Endothelial cell of umbilical vein (primary cell): ENCODE measurements at regions of chr19 and their contacts with region 1.

Region 1: DNA sequence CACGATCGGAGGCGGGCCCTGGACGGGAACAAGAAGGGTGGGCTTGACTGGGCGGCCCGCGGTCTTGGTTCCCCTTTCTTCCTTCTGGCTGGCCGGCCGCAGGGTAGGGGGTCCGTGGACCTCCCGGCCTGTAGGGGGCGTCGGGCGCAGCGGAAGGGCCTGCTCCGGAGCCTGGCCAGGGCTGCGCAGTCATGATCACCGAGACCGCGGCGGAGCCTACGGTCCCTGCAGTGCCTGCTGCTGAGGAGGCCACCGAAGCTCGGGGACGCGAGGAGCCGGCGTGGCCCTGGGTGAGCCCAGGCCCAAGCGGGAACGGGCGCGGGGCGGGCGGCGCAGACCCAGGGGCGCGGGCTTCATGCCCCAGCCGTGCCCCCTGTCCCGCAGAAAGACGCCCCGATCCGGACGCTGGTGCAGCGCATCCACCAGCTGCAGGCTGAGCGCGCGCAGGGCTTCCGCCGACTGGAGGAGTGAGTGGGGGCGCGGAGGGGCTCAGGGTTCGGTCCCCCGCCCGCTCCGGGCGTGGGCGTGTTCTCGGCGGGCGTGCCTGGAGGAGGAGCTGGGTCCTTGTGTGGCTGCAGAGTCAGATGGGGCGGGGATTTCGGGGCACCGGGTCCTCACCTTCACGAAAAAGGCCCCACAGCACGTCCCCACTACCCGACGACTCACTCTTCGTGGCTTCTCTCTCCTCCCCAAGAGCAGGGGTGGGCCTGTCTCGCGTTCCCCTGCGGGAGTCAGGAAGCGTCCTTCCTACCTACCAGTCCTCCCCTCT is at the start of gene REX1BD:
- DNase-seq: peak; percentile 85
- H3K4me3 ChIP-seq: peak within 1 kb of the TSS; percentile 32 to 78 (median 65)
- H3K27ac ChIP-seq: peak within 1 kb of the TSS; percentile 16
- H3K4me1 ChIP-seq: peaks cover 15% of the 10 kb centered on the region
- H3K27me3 ChIP-seq: no peaks in the 10 kb centered on the region
- CTCF ChIP-seq: peak; percentile 95 to 96
- POLR2A ChIP-seq: peak; percentile 87
- total RNA-seq, gene REX1BD: 64.0 and 64.4 TPM in 2 replicates

Region 2: DNA sequence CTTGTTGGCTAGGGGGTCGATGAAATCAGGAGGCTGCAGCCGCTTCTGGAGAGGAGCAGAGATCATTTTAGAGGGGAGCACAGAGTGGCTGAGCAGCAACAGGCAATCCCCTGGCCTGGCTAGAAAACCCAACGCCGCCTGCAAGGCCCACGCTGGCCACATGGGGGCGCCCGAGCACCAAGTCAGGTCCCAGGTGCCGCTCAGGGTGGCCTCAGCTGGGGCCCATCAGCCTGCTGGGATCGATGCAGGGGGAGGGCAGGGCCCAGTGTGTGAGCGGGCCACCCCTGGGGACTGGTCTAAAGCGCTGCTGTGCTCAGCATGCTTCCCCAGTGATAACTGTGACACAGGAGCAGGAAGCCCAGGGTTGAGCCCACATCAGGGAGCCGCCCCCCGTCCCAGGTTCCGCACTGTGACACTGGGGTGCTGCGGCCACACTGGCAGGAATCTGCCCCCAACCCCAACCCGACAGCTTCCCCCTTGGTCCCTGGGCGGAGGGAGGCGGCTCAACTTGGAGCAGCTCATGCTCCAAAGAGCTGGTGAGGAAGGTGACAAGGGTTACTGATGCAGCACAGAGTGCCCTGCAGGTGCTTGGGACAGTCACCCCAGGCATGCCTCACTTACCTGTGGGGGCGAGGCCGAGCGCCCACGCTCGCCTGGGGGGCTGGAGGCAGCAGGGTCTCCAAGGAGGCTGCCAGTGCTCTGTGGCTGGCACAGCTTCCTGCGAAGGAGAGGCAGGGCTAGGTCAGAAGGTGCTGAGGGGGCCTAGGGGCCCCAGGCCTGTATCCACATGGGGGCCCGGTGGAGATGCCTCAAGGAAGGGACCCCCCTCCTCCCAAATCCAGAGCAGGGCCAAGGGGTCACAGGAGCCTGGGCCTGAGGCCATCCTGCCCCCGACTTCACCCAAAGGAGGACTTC is 137.6 kb before region 1 on chr19:
- CTCF ChIA-PET with region 1: interaction called, 10 read pairs
- POLR2A ChIA-PET with region 1: no interaction called
- dilution Hi-C with region 1: no loop called
- intact Hi-C with region 1: no loop called
- DNase-seq: peak; percentile 65
- H3K4me3 ChIP-seq: no peak overlapping the region
- H3K27ac ChIP-seq: no peak overlapping the region
- H3K4me1 ChIP-seq: no peaks in the 10 kb centered on the region
- H3K27me3 ChIP-seq: no peaks in the 10 kb centered on the region
- CTCF ChIP-seq: peak; percentile 97 to 99
- POLR2A ChIP-seq: no peak

Region 3: GRCh38 chr19:18460900-18461299 is 127.9 kb before region 1 on chr19:
- CTCF ChIA-PET with region 1: interaction called, 18 read pairs
- POLR2A ChIA-PET with region 1: interaction called, 4 read pairs
- dilution Hi-C with region 1: no loop called
- intact Hi-C with region 1: no loop called
- DNase-seq: no peak
- H3K4me3 ChIP-seq: no peak overlapping the region
- H3K27ac ChIP-seq: no peak overlapping the region
- H3K4me1 ChIP-seq: peaks cover 10% of the 10 kb centered on the region
- H3K27me3 ChIP-seq: no peaks in the 10 kb centered on the region
- CTCF ChIP-seq: no peak
- POLR2A ChIP-seq: no peak

Region 4: DNA sequence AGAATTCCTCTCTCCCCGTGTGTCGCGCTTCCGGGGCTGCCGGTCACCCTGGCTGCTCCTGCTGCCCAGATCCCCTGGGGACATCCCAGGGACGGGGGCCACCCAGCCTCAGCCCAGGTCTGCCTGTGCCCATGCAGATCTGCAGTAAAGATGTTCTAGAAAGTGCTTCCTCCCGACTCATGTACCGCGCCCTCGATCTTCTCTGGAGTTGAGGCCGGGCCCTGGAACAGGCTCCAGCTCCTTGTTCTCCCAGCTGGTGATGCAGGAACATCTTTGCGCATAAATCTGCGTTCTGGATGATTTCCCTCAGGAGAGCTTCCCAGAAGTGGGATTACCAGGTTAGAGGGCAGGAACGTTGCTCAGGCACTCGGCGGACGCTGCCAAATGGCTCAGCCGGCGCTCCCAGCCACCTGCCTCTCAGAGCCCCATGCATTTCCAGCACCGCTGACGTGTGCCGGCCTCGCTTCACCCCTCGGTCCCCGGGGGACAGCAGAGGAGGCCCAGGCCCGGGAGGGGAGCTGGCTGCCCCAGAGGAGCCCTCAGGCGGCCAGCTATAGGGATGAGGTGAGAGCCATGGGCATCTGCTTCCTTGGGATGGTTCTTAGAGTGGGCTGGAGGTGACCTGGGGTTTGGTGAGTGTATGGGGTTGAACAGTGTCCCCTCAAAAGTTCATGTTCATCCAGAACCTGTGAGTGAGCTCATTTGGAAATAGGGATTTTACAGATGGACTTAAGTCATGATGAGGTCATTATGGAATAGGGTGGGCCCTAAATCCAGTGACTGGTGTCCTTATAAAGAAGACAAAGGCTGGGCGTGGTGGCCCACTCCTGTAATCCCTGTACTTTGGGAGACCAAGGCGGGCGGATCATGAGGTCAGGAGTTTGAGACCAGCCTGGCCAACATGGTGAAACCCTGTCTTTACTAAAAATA is 137.3 kb after region 1 on chr19:
- CTCF ChIA-PET with region 1: no interaction called
- POLR2A ChIA-PET with region 1: no interaction called
- dilution Hi-C with region 1: no loop called
- intact Hi-C with region 1: no loop called
- DNase-seq: no peak
- H3K4me3 ChIP-seq: no peak overlapping the region
- H3K27ac ChIP-seq: no peak overlapping the region
- H3K4me1 ChIP-seq: no peaks in the 10 kb centered on the region
- H3K27me3 ChIP-seq: no peaks in the 10 kb centered on the region
- CTCF ChIP-seq: no peak
- POLR2A ChIP-seq: no peak